Right ventricle myocardium superior (tissue), 1 donor: ENCODE measurements at regions of chr17 and their contacts with region 1.

Region 1: GRCh38 chr17:42101513-42102319 is 3.4 kb upstream of the ZNF385C start:
- DNase-seq: peak; percentile 88
- ATAC-seq: peak; percentile 91

Region 2: DNA sequence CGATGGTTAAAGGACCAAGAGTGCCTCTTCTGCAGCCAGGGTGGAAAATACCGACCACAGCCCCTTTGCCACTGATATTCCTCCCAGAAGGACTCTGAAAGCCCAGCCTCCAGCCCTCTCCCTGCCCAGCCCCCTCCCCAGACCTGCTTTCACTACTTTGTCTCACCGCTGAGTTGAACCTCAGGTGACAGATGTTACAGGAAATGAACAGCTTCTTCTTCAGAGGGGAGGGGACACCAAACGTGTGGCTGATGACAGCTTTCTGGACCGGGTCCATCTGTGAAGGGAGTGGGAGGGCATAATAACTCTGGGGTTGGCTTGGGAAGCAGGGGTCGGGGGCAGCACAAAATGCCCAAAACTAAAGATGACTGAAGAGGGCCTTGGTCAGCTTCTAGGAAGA is 67.7 kb before region 1 on chr17:
- intact Hi-C with region 1: no loop called
- DNase-seq: no peak
- ATAC-seq: no peak

Region 3: DNA sequence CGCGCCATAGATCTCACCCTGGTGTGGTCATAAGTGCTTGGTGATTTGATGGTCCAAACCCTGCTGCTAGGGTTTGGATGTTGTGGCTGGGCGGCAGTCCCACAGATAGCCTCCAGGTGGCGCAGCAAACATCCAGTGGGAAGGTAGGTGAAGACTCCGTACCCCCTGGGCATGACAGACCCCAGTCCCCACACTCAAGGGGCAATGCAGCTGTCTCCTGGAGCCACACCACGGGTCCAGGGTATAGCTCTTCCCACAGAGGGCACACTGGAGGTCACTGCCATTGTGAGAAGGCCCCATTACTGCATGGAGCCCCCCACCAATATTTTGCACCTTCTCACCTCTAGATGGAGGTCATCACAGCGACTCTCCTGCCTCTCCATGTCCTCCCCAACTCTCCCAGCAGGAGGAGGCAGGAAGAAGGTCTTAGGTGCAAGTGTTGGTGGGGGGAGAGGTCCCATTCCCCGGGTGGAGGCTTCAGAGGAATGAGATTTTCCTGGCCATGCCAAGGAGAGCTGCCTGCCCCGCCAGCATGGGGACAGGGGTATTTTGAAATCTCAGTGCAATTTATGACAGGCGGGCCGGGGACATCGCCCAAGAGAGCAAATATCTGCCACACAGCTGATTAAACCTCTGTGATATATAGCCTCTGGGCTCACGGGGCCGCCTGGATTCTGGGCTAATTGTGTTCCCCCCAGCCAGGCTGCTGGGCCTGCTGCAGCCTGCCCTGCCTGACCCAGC is 34.2 kb before region 1 on chr17:
- intact Hi-C with region 1: loop called (anchors 5 kb)
- DNase-seq: peak; percentile 77
- ATAC-seq: peak; percentile 40

Region 4: GRCh38 chr17:42171831-42172230 is 70.1 kb after region 1 on chr17:
- intact Hi-C with region 1: no loop called
- DNase-seq: no peak
- ATAC-seq: no peak